ENCODE measurements at regions of chr17 and their contacts with region 1.

Region 1: DNA sequence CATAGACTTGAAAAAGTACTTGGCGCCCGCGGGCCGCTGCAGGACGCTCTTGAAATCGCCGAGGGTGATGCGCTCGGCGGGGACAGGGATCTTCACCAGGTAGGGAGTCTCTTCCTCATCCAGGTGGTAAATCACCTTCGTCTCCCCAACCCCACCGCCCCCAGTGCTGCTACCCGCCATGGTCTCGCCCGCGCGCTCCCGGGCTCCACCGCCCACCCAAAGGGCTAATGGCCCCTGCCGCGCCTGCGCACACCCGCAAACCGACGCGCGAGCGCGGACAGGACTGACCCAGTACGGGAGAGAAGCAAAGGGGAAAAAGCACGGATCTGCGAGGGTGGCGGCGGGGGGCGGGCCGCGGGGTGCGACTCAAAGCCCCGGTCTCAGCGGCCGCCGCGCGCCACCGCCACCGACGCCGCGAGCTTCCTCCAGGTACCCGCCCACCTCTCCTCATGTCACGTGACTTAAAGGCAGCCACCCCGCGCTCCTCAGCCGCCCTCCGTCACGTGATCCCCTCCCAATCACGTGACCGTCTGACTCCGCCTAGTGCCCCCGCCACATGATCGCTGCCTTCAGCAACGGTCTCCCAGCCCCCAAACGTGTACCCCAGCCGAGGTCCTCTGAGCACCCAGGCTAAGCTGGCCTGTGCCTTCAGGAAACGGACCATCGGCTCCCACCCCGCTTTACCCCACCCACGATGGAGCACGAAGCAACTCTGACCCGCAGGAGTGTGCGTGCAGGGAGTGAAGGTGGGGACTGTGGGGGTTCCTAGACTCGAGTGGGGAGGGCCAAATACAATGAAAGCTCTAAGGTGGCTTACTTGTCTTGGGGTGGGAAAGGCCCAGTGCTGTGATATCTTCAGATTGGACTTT is at the start of gene DVL2:
- DNase-seq: peak; percentile 96
- CTCF ChIP-seq: no peak

Region 2: GRCh38 chr17:7219812-7220581 is 14.3 kb before region 1 on chr17 and contains the starts of genes ACADVL and DLG4:
- CTCF ChIA-PET with region 1: interaction called, 26 read pairs
- POLR2A ChIA-PET with region 1: interaction called, 6 read pairs
- DNase-seq: peak; percentile 91
- CTCF ChIP-seq: no peak

Region 3: DNA sequence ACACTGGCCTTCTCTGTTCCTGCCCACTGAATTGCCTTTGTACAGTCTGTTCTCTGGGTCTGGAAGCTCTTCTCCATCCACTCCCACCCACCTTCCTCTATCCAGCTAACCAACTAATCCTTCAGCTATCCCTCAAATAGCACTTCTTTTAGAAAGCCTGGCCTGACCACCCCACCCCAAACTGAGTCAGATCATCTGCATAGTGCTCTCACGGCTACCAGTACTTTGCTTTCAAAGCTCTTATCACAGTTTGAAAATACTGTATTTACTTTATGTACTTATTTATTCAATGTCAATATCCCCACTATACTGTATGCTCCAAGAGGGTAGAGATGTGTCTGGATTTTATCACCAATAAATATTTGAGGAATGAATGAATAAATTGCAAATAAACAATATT is 32.5 kb after region 1 on chr17:
- CTCF ChIA-PET with region 1: no interaction called
- POLR2A ChIA-PET with region 1: no interaction called
- DNase-seq: no peak
- CTCF ChIP-seq: no peak

Measured in GM10248 (cell line).